ENCODE measurements at regions of chr2 and their contacts with region 1.

Region 1: DNA sequence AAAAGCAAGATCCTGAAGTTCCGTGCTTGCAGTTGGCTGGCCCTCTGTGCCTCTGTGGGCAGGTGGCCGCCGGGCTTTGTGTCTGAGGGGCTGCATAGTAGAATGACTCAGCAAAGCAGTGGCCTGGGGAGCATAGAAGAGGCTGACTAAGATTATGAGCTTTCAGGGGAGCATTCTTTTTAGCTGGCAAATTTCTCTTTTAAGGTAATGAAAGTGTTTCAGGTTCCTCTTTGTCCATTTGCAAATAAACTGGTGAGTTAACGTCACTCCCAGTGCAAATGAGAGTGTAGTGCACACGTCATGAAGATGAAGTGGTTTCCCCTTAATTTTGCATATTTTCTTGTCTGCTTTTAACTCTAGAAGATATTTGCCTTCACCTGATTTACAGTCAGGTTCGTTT is 98.6 kb downstream of the BCL2L11 start:
- DNase-seq: no peak
- ATAC-seq: no peak

Region 2: GRCh38 chr2:111194835-111195621 is 24.3 kb before region 1 on chr2:
- intact Hi-C with region 1: loop called (anchors 2 kb)
- DNase-seq: no peak
- ATAC-seq: no peak

Region 3: GRCh38 chr2:111698743-111699554 is 479.7 kb after region 1 on chr2:
- intact Hi-C with region 1: no loop called
- DNase-seq: peak; percentile 80
- ATAC-seq: peak; percentile 94